GM12878 (cell line): ENCODE measurements at regions of chr9 and their contacts with region 1.

Region 1: DNA sequence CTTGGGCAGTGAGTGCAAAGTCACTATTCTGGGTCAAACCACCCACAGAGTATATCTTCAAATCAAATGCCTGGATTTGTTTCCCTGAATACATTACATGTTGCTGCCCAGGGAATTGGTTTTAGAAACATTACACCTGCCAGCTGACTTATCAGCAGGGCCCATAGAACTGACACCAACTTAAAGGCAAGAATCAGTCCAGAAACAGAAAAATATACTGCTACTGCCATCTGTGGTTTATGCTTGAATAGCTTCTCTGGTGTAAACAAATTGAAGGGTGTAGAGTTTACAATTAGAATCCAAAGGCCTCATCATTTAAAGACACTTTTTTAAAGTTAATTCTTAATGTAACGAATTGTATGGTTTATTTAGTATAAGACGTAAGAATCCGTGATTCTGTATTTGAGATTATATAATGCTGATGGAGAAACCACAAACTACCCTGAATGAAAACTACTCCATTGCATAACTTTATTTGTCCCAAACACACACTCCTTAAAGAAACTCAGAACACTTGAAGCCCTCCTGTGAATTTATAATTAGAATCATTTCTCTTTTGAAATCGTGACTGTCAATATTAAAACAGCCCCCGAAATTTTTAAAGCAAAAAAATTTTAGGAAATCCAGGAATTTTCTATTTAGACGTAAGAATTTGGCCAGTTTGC is 6.2 kb downstream of the NR6A1 start:
- DNase-seq: no peak
- ATAC-seq: peak; percentile 81
- H3K4me3 ChIP-seq: no peak overlapping the region; the same call in 1 of the 2 replicates
- H3K27ac ChIP-seq: peak overlapping the region; percentile 28; the same call in 1 of the 2 replicates
- H3K4me1 ChIP-seq: peaks cover 9% of the 10 kb centered on the region
- H3K27me3 ChIP-seq: no peaks in the 10 kb centered on the region
- CTCF ChIP-seq: peak; percentile 33 to 62 (median 54); a peak in 5 of 6 replicates
- EP300 ChIP-seq: no peak
- POLR2A ChIP-seq: no peak
- RAD21 ChIP-seq: peak; percentile 62

Region 2: GRCh38 chr9:124415102-124415851 is 349.6 kb before region 1 on chr9 and contains the start of gene PSMB7:
- CTCF ChIA-PET with region 1: interaction called, 3 read pairs
- POLR2A ChIA-PET with region 1: interaction called, 4 read pairs
- RAD21 ChIA-PET with region 1: interaction called, 5 read pairs
- SMC1A ChIA-PET with region 1: no interaction called
- in situ Hi-C with region 1: no loop called
- intact Hi-C with region 1: loop called (anchors 5 kb)
- DNase-seq: peak; percentile 87
- ATAC-seq: peak; percentile 90
- H3K4me3 ChIP-seq: peak within 1 kb of the TSS; percentile 90
- H3K27ac ChIP-seq: peak within 1 kb of the TSS; percentile 54
- H3K4me1 ChIP-seq: peaks cover 9% of the 10 kb centered on the region
- H3K27me3 ChIP-seq: no peaks in the 10 kb centered on the region
- CTCF ChIP-seq: peak; percentile 86 to 93 (median 86)
- EP300 ChIP-seq: peak in 1 of 2 experiments; percentile 29; a peak in 1 of 4 replicates
- POLR2A ChIP-seq: peak; percentile 81
- RAD21 ChIP-seq: no peak
- polyA plus RNA-seq, gene PSMB7: 441 to 564 TPM

Region 3: GRCh38 chr9:124551472-124552272 is 213.2 kb before region 1 on chr9:
- CTCF ChIA-PET with region 1: interaction called, 26 read pairs
- POLR2A ChIA-PET with region 1: no interaction called
- RAD21 ChIA-PET with region 1: interaction called, 5 read pairs
- SMC1A ChIA-PET with region 1: interaction called, 18 read pairs
- in situ Hi-C with region 1: no loop called
- intact Hi-C with region 1: no loop called
- DNase-seq: peak; percentile 4
- ATAC-seq: peak; percentile 71
- H3K4me3 ChIP-seq: no peak overlapping the region
- H3K27ac ChIP-seq: no peak overlapping the region
- H3K4me1 ChIP-seq: no peaks in the 10 kb centered on the region
- H3K27me3 ChIP-seq: no peaks in the 10 kb centered on the region
- CTCF ChIP-seq: peak; percentile 28 to 69 (median 61); a peak in 5 of 6 replicates
- EP300 ChIP-seq: no peak
- POLR2A ChIP-seq: no peak
- RAD21 ChIP-seq: peak; percentile 88

Region 4: GRCh38 chr9:124658165-124659017 is 106.5 kb before region 1 on chr9:
- CTCF ChIA-PET with region 1: interaction called, 9 read pairs
- POLR2A ChIA-PET with region 1: interaction called, 12 read pairs
- RAD21 ChIA-PET with region 1: interaction called, 12 read pairs
- SMC1A ChIA-PET with region 1: interaction called, 13 read pairs
- in situ Hi-C with region 1: no loop called
- intact Hi-C with region 1: no loop called
- DNase-seq: peak; percentile 93
- ATAC-seq: peak; percentile 91
- H3K4me3 ChIP-seq: peak overlapping the region; percentile 75
- H3K27ac ChIP-seq: peak overlapping the region; percentile 96
- H3K4me1 ChIP-seq: 0 out of 2 replicates have a peak, but pooled peaks cover 3% of the 10 kb centered on the region
- H3K27me3 ChIP-seq: no peaks in the 10 kb centered on the region
- CTCF ChIP-seq: no peak
- EP300 ChIP-seq: no peak
- POLR2A ChIP-seq: peak; percentile 95
- RAD21 ChIP-seq: no peak

Region 5: DNA sequence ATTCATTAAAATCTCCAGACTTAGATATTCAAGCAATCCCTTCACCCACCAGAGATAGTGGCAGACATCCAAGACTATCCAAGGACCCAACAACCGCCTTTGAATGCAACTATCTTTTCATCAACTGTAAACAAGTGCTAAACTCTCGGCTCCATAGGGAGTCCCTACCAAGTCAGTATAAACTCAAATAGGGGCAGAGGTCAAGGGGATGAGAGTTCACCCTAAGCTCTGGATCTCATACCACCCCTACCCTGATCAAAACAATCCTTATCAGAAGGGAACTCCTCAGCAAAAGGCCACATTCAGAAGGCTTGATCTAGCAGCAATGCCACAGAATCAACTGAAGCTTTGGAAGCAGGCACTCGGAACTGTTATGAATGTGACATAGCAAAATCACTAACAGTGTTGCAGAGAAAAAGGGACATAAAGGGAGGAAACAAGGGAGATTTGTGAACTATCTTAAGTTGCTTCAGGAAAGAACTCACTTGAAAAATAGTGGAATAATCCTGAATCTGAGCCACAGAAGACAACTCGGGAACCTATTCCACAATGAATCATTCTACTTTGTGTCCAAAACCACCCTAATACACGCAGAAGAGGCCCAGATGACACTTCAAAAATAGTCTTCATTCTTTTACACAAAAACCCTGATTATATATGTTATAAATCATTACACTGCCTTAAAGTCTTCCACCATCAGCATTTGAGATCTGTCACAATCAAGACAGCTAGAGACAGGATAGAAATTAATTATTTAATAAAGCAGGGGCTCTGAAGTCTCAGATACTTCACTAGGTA is 43.6 kb before region 1 on chr9:
- CTCF ChIA-PET with region 1: interaction called, 201 read pairs
- POLR2A ChIA-PET with region 1: interaction called, 3 read pairs
- RAD21 ChIA-PET with region 1: interaction called, 10 read pairs
- SMC1A ChIA-PET with region 1: interaction called, 4 read pairs
- in situ Hi-C with region 1: no loop called
- intact Hi-C with region 1: no loop called
- DNase-seq: no peak
- ATAC-seq: no peak
- H3K4me3 ChIP-seq: no peak overlapping the region
- H3K27ac ChIP-seq: no peak overlapping the region
- H3K4me1 ChIP-seq: no peaks in the 10 kb centered on the region
- H3K27me3 ChIP-seq: no peaks in the 10 kb centered on the region
- CTCF ChIP-seq: no peak
- EP300 ChIP-seq: no peak
- POLR2A ChIP-seq: no peak
- RAD21 ChIP-seq: no peak

Region 6: GRCh38 chr9:124754289-124754688 is 10.6 kb before region 1 on chr9:
- CTCF ChIA-PET with region 1: interaction called, 45 read pairs
- POLR2A ChIA-PET with region 1: interaction called, 7 read pairs
- RAD21 ChIA-PET with region 1: interaction called, 10 read pairs
- SMC1A ChIA-PET with region 1: interaction called, 21 read pairs
- in situ Hi-C with region 1: no loop called
- intact Hi-C with region 1: no loop called
- DNase-seq: no peak
- ATAC-seq: peak; percentile 50; the same call in 1 of the 3 replicates
- H3K4me3 ChIP-seq: no peak overlapping the region
- H3K27ac ChIP-seq: no peak overlapping the region
- H3K4me1 ChIP-seq: peaks cover 14% of the 10 kb centered on the region
- H3K27me3 ChIP-seq: no peaks in the 10 kb centered on the region
- CTCF ChIP-seq: peak; percentile 10 to 41 (median 12); a peak in 3 of 6 replicates
- EP300 ChIP-seq: no peak
- POLR2A ChIP-seq: no peak
- RAD21 ChIP-seq: peak; percentile 57